ENCODE measurements at regions of chr7 and their contacts with region 1.

Region 1: DNA sequence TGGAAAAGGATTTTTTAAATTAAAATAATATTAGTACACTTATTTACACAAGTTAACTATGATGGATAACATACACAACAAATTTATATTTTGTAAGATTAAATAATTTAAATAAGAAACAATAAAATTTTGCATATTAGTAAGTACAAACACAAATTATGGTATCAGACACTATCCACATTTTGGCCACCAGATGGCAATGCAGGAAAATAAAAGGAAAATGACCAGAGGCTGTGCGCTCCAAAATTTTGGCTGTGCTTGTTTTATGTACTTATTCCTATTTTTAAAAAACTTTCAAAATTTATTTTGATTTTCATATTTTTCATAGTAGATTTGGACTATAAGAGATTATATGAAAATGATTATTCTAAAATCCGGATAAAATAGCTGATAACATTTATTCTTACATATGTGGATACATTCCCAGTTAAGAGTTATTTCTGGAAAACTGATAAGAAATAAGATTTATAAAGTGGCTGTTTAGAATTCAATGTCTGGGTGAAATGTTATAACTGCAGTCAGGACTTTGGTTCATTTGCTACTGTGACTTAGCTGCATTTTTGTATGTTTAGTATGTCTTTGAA is 274.7 kb upstream of the HGF start:
- DNase-seq: peak; percentile 19
- H3K4me3 Mint-ChIP-seq: no peak overlapping the region
- H3K27ac Mint-ChIP-seq: no peak overlapping the region
- H3K4me1 Mint-ChIP-seq: no peaks in the 10 kb centered on the region
- H3K27me3 Mint-ChIP-seq: no peaks in the 10 kb centered on the region
- CTCF ChIP-seq: no peak

Region 2: DNA sequence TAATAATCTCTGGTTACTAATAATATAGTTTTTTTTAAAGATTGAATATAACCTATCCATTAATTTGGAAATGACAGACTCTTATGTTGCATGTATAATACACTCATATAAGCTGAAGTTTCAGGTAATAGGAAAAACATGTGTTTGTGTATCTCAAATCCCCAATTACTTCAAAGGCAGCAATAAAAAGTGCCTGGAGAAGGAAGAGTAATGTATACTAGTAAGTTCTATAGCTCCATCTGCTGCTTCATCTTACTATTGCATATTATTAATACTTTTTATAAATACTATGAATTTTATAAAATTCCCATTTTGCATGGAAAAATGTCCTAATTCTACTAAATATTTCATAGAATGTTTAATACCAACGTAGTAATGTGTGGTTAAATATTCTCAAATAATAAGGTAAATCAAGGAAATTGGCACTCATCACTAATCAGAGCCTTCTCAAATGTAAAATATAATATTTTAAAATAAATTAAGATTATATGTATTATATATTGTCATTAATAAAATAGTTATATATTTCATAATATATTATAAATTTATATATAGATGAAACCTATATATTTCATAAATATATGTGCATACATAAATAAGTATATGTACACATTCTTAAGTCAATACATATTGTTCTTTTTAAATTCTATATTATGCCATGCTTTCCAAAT is 586.6 kb before region 1 on chr7:
- CTCF ChIA-PET with region 1: no interaction called
- intact Hi-C with region 1: no loop called
- DNase-seq: no peak
- H3K4me3 Mint-ChIP-seq: no peak overlapping the region
- H3K27ac Mint-ChIP-seq: no peak overlapping the region
- H3K4me1 Mint-ChIP-seq: no peaks in the 10 kb centered on the region
- H3K27me3 Mint-ChIP-seq: no peaks in the 10 kb centered on the region
- CTCF ChIP-seq: no peak

Region 3: DNA sequence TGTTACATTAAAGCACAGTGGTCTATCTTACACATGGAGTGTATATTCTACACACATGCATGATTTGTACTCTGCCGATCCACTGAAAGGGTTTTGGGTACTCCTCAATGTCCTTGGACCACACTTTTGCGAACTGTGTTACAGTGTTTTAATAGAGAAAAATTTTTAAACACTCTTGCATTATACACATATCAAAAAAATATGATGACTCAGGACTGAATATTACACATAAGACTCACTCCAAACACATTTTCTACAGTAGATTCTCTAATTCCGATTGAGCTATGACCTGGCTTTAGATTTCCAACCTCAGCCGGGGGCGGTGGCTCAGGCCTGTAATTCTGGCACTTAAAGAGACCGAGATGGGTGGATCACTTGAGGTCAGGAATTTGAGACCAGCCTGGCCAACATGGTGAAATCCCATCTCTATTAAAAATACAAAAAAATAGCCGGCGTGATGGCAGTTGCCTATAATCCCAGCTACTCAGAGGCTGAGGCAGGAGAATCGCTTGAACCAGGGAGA is 176.6 kb after region 1 on chr7:
- CTCF ChIA-PET with region 1: no interaction called
- intact Hi-C with region 1: loop called (anchors 10 kb)
- DNase-seq: no peak
- H3K4me3 Mint-ChIP-seq: no peak overlapping the region
- H3K27ac Mint-ChIP-seq: no peak overlapping the region
- H3K4me1 Mint-ChIP-seq: no peaks in the 10 kb centered on the region
- H3K27me3 Mint-ChIP-seq: no peaks in the 10 kb centered on the region
- CTCF ChIP-seq: no peak

Region 4: GRCh38 chr7:82481499-82482097 is 437.0 kb after region 1 on chr7:
- CTCF ChIA-PET with region 1: no interaction called
- intact Hi-C with region 1: loop called (anchors 10 kb)
- DNase-seq: no peak
- H3K4me3 Mint-ChIP-seq: no peak overlapping the region
- H3K27ac Mint-ChIP-seq: no peak overlapping the region
- H3K4me1 Mint-ChIP-seq: no peaks in the 10 kb centered on the region
- H3K27me3 Mint-ChIP-seq: no peaks in the 10 kb centered on the region
- CTCF ChIP-seq: peak; percentile 37

Region 5: GRCh38 chr7:82572195-82572880 is 527.7 kb after region 1 on chr7:
- CTCF ChIA-PET with region 1: no interaction called
- intact Hi-C with region 1: loop called (anchors 2 kb)
- DNase-seq: peak; percentile 76
- H3K4me3 Mint-ChIP-seq: no peak overlapping the region
- H3K27ac Mint-ChIP-seq: no peak overlapping the region
- H3K4me1 Mint-ChIP-seq: no peaks in the 10 kb centered on the region
- H3K27me3 Mint-ChIP-seq: no peaks in the 10 kb centered on the region
- CTCF ChIP-seq: peak; percentile 60

Region 6: GRCh38 chr7:82605247-82605872 is 560.8 kb after region 1 on chr7:
- CTCF ChIA-PET with region 1: no interaction called
- intact Hi-C with region 1: loop called (anchors 1 kb)
- DNase-seq: peak; percentile 29
- H3K4me3 Mint-ChIP-seq: no peak overlapping the region
- H3K27ac Mint-ChIP-seq: no peak overlapping the region
- H3K4me1 Mint-ChIP-seq: no peaks in the 10 kb centered on the region
- H3K27me3 Mint-ChIP-seq: no peaks in the 10 kb centered on the region
- CTCF ChIP-seq: no peak

Region 7: GRCh38 chr7:82729172-82730030 is 684.8 kb after region 1 on chr7:
- CTCF ChIA-PET with region 1: no interaction called
- intact Hi-C with region 1: loop called (anchors 1 kb)
- DNase-seq: peak; percentile 35
- H3K4me3 Mint-ChIP-seq: no peak overlapping the region
- H3K27ac Mint-ChIP-seq: no peak overlapping the region
- H3K4me1 Mint-ChIP-seq: no peaks in the 10 kb centered on the region
- H3K27me3 Mint-ChIP-seq: no peaks in the 10 kb centered on the region
- CTCF ChIP-seq: peak; percentile 33